ENCODE measurements at regions of chr2 and their contacts with region 1.

Region 1: GRCh38 chr2:131034122-131035051 is 58.9 kb downstream of the FAM168B start:
- DNase-seq: peak in 6 of 10 donors; percentile 36 to 82 (median 69)
- H3K4me3 ChIP-seq: peak overlapping the region; percentile 27 to 75 (median 62)
- H3K27ac ChIP-seq: peak overlapping the region in 55 of 59 donors; percentile 5 to 92 (median 75)
- H3K27me3 ChIP-seq: peaks cover 0 to 4% (median 0%) of the 10 kb centered on the region in 45 donors
- CTCF ChIP-seq: no peak

Region 2: GRCh38 chr2:130391058-130391871 is 643.1 kb before region 1 on chr2:
- intact Hi-C with region 1: no loop called
- DNase-seq: peak; percentile 67 to 93 (median 87)
- H3K4me3 ChIP-seq: peak overlapping the region; percentile 53 to 90 (median 78)
- H3K27ac ChIP-seq: peak overlapping the region in 58 of 59 donors; percentile 62 to 97 (median 91)
- H3K27me3 ChIP-seq: no peaks in the 10 kb centered on the region
- CTCF ChIP-seq: peak in 11 of 56 donors; percentile 3 to 51 (median 9)

Region 3: DNA sequence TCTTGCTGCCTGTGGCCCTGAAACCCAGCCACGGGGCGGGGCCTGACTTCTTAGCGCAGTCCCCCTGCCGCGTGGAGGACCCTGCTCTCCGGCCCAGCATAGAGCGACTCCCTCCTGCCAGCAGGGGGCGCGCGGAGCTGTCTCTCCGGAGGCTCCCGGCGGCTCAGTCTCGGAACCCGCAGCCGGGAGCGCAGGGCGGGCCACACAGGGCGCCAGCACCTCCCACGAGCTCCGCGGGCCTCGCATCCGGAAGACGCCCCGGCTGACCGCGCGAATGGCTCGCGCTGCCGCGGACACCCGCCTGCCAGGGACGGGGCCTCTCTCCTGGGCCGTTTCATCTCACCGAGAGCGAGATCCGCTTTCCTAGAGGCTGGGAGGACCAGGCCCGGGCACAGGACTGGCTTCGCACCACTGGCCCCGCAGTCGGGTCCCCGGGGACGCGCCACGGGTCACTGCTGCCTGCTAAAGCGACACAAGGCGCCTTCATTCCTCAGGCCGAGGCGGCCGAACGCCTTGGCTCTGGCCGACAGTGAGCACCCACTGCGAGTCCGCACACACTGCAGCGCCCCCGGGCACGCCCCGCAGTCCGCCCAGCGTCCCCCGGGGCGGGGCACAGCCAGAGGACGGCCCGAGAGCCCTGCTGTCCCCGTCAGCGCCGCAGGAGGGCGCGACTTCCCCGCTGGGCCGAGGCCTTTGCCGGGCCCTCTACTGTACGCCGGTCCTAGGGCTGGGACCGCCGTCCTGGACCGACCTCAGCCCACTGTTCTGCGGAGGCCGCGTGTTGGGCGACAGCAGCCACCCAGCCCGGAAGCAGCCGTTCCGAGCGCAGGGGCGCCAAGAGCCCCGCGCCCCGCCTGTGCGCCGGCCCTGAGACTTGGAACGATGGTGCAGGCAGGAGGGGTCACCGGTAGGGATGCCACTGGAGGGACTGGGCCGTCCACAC is 236.6 kb before region 1 on chr2:
- intact Hi-C with region 1: loop called (anchors 10 kb)
- DNase-seq: peak; percentile 81 to 95 (median 90)
- H3K4me3 ChIP-seq: peak overlapping the region; percentile 56 to 99 (median 84)
- H3K27ac ChIP-seq: peak overlapping the region; percentile 76 to 99 (median 96)
- H3K27me3 ChIP-seq: no peaks in the 10 kb centered on the region
- CTCF ChIP-seq: peak; percentile 56 to 92 (median 81)

Region 4: DNA sequence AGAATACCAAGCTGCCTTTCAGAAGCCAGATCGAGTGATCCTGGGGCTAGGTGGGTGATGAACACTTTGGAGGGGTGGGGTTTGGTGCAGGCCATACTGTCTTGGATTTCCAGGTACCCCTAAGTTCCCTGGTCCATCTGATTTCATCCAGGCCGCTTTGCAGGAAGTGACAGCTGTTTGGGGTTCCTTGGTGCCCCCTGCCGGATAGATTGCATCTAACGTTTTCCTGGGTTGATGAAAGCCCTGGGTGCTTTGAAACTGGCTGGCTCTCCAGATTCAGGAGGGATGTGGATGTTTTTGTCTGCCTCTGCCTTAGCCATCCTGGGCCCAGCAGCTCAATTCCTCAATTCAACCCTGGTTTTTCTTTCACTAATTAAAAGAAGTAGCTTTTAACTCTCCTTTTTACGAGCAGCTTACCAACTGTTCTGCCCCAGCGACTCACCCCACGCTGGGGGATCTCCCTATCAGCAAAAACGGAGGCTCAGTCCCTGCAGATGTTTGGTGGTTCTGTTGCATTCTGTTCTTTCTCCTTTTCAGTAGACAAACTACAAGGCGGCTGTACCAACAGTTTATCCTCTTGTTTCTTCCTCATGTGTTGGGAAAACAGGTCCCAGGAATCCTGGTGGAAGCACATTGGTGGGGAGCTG is 160.6 kb before region 1 on chr2:
- intact Hi-C with region 1: loop called in 1 of 2 experiments (anchors 10 kb)
- DNase-seq: peak; percentile 64 to 88 (median 79)
- H3K4me3 ChIP-seq: no peak overlapping the region
- H3K27ac ChIP-seq: peak overlapping the region in 47 of 59 donors; percentile 4 to 92 (median 61)
- H3K27me3 ChIP-seq: no peaks in the 10 kb centered on the region
- CTCF ChIP-seq: peak; percentile 43 to 86 (median 73)

Region 5: DNA sequence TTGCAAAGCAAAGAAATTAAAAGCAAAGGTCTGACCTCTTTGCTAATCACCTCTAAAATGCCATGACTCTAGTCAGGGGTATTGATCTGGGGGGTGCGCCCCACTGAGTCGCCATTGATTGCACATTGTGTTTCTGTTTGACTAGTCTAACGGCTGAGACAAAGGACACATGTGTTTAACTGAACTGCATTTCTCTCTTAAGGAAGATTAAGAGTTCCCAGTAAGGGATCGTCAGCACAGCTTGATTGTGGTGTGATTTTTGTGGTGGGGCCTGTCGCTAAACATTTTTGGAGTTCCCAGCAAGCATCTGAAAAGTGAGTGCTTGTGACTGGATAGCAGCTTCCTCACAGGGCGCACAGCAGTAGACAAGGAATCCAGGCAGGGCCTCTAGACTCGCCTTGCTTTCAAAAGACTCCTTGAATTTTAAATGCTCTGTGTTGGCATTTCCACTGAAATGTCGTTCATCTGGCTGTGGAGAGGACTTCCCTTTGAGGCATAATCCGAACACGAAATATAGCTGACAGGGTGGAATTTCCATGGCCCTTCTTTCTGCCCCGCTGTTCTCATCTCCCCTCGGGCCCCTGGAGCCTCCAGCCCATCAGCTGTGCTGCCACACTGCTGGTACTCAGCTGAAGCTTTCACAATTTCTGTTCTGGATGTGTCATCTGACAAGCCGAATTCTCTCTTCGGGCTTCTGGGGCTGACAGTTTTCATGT is 67.5 kb before region 1 on chr2:
- intact Hi-C with region 1: loop called in 1 of 2 experiments (anchors 5 kb)
- DNase-seq: no peak
- H3K4me3 ChIP-seq: peak overlapping the region in 23 of 59 donors; percentile 3 to 71 (median 60)
- H3K27ac ChIP-seq: peak overlapping the region in 23 of 59 donors; percentile 1 to 63 (median 36)
- H3K27me3 ChIP-seq: peaks cover 0 to 30% (median 0%) of the 10 kb centered on the region in 45 donors
- CTCF ChIP-seq: no peak

Region 6: GRCh38 chr2:131093006-131093695 is 58.8 kb after region 1 on chr2 and contains the start of gene FAM168B:
- intact Hi-C with region 1: loop called (anchors 1 to 5 kb)
- DNase-seq: peak; percentile 63 to 89 (median 80)
- H3K4me3 ChIP-seq: peak within 1 kb of the TSS; percentile 59 to 97 (median 85)
- H3K27ac ChIP-seq: peak within 1 kb of the TSS; percentile 79 to 99 (median 97)
- H3K27me3 ChIP-seq: no peaks in the 10 kb centered on the region
- CTCF ChIP-seq: peak in 21 of 56 donors; percentile 4 to 58 (median 32)
- total RNA-seq, gene FAM168B: 119 to 220 (median 170) TPM

Region 7: GRCh38 chr2:131105156-131105949 is 71.0 kb after region 1 on chr2 and contains the start of gene PLEKHB2:
- intact Hi-C with region 1: loop called in 1 of 2 experiments (anchors 5 kb)
- DNase-seq: peak; percentile 87 to 98 (median 90)
- H3K4me3 ChIP-seq: peak within 1 kb of the TSS; percentile 69 to 100 (median 97)
- H3K27ac ChIP-seq: peak within 1 kb of the TSS; percentile 53 to 98 (median 92)
- H3K27me3 ChIP-seq: no peaks in the 10 kb centered on the region
- CTCF ChIP-seq: peak in 50 of 56 donors; percentile 26 to 74 (median 48)
- total RNA-seq, gene PLEKHB2: 67.0 to 178 (median 121) TPM

Region 8: GRCh38 chr2:131148426-131148825 is 114.0 kb after region 1 on chr2:
- intact Hi-C with region 1: loop called in 1 of 2 experiments (anchors 2 kb)
- DNase-seq: peak in 1 of 10 donors; percentile 67
- H3K4me3 ChIP-seq: no peak overlapping the region
- H3K27ac ChIP-seq: peak overlapping the region in 1 of 59 donors; percentile 9
- H3K27me3 ChIP-seq: no peaks in the 10 kb centered on the region
- CTCF ChIP-seq: peak in 33 of 56 donors; percentile 6 to 55 (median 35)

Measured in dorsolateral prefrontal cortex (tissue), 120 donors.